ENCODE measurements at regions of chr6 and their contacts with region 1.

Region 1: DNA sequence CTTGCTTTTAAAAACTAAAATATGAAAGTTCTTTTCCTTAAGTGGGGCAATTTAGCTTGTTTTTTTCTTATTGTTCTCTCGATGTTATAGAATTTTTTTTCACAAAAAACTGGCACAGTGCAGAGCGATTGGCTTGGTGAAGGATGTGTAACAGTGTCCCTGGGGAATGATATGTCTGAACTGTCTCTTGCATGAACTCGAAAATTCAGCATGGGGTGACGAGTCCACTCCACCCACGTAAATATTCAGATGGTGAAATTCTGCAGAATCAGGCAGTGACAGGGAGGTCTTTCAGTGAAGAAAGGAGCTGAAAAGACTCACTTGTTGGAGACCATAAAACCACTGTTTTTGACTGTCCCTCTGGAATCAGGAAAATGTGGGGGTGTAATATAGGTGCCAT is 505.3 kb downstream of the MMUT start:
- DNase-seq: no peak
- ATAC-seq: no peak
- H3K4me3 ChIP-seq: no peak overlapping the region
- H3K27ac ChIP-seq: no peak overlapping the region
- H3K4me1 ChIP-seq: no peaks in the 10 kb centered on the region
- H3K27me3 ChIP-seq: no peaks in the 10 kb centered on the region
- CTCF ChIP-seq: no peak
- POLR2A ChIP-seq: no peak

Region 2: DNA sequence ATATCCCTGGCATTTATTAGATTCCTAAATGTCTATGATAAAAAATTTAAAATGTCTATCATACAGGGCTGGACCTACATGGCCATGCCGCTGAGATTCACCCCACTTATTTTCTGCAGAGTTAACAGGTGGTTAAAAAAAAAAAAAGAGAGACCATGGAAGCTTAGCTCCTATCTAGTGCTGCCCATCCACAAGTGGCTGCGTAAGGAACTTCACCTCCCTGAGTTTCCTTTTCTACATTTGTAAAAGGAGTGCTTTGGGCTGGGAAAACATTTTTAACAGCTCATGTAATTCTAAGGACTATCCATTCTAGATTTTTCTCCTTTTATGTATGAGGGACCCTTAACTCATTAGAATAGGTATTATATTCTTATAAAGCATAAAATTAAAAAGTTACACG is 28.8 kb before region 1 on chr6:
- intact Hi-C with region 1: no loop called
- DNase-seq: no peak
- ATAC-seq: no peak
- H3K4me3 ChIP-seq: no peak overlapping the region
- H3K27ac ChIP-seq: no peak overlapping the region
- H3K4me1 ChIP-seq: no peaks in the 10 kb centered on the region
- H3K27me3 ChIP-seq: no peaks in the 10 kb centered on the region
- CTCF ChIP-seq: no peak
- POLR2A ChIP-seq: no peak

Region 3: GRCh38 chr6:48978016-48978415 is 20.2 kb after region 1 on chr6:
- intact Hi-C with region 1: loop called in 1 of 10 experiments (anchors 2 kb)
- DNase-seq: no peak
- ATAC-seq: no peak
- H3K4me3 ChIP-seq: no peak overlapping the region
- H3K27ac ChIP-seq: no peak overlapping the region
- H3K4me1 ChIP-seq: no peaks in the 10 kb centered on the region
- H3K27me3 ChIP-seq: no peaks in the 10 kb centered on the region
- CTCF ChIP-seq: no peak
- POLR2A ChIP-seq: no peak